Colonic mucosa (tissue), 4 donors: ENCODE measurements at regions of chr9 and their contacts with region 1.

Region 1: DNA sequence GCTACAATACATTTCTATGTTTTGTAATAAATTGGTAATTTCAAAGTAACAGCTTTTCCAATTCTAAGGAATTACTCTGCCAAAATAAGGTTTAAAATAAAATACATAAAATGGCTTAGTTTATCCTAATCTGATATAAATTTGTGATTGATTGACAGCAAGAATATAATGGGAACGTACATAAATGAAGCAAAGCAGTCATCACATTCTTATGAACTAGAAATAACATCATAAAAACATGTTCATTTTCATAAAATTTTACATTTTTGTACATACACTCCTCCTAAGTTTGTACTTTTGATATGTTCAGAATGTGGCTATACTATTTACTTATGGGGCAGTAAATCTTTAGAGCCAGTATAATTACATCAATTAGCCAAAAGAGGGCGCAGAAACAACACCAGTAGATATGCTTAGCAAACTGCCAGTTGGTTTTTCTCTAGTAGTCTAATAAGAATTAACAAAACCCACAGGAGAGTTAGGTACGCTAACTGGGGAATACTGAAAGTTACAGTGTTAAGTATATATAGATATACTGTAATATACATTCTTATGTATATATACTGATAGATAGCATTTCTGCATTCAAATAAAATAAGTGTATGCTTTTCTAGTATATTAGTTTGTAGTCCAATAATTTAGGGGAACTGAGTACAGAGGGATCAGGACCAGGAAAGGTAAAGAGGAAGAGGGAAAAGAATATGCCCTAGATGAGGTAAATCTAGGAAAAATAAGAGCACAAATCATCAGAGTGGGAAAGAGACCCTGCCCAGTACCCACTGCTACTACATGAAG is 76.8 kb downstream of the ZDHHC21 start:
- DNase-seq: no peak
- H3K4me3 ChIP-seq: no peak overlapping the region
- H3K27ac ChIP-seq: no peak overlapping the region
- H3K4me1 ChIP-seq: no peaks in the 10 kb centered on the region
- H3K27me3 ChIP-seq: no peaks in the 10 kb centered on the region
- CTCF ChIP-seq: peak; percentile 65

Region 2: GRCh38 chr9:14547245-14548060 is 68.9 kb before region 1 on chr9:
- intact Hi-C with region 1: no loop called
- DNase-seq: no peak
- H3K4me3 ChIP-seq: no peak overlapping the region
- H3K27ac ChIP-seq: no peak overlapping the region
- H3K4me1 ChIP-seq: no peaks in the 10 kb centered on the region
- H3K27me3 ChIP-seq: no peaks in the 10 kb centered on the region
- CTCF ChIP-seq: no peak

Region 3: DNA sequence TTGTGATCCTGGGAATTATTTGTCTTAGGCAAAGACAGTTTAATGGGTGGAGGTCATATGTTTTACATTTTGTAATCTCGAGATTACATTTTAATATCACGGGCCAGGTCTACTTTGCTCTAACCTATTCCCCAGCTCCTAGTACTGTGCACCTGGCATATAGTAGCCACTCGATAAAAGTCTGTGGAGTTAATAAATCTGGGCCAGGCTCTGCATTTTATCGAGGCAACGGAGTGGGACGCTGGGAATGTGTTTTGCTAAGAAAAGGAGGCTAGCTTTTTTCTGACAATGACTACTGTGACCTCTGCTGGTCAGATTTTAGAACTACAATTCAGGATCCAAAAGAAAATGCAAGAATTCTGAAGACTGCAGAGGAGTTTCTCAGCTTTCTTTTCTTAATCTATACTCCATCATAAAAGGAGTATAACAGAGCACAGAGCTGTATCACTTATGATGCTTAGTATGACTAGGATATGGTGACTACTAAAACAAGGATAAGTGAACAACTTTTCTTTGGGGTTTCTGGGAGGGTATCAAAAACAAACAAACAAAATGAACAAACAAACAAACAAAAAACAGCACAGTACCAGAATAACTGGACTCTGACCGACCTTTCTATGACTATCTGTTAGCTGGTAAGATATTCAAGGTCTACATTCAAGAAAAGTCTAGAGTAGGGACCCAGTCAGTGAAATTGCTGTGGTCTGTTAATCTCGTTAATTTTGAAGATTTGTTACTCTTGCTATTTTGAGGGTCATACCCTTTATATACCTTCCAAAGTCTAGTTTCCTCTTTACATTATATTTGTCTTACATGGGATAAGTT is 152.2 kb after region 1 on chr9:
- intact Hi-C with region 1: loop called (anchors 10 kb)
- DNase-seq: no peak
- H3K4me3 ChIP-seq: no peak overlapping the region
- H3K27ac ChIP-seq: no peak overlapping the region
- H3K4me1 ChIP-seq: no peaks in the 10 kb centered on the region
- H3K27me3 ChIP-seq: no peaks in the 10 kb centered on the region
- CTCF ChIP-seq: peak; percentile 72